Sciatic nerve (tissue), 2 donors: ENCODE measurements at regions of chr6 and their contacts with region 1.

Region 1: GRCh38 chr6:161971043-161971442 is 697.2 kb upstream of the AGPAT4 start:
- DNase-seq: no peak
- ATAC-seq: no peak

Region 2: GRCh38 chr6:161710698-161711097 is 260.3 kb before region 1 on chr6:
- intact Hi-C with region 1: no loop called
- DNase-seq: no peak
- ATAC-seq: no peak

Region 3: GRCh38 chr6:161985876-161986423 is 14.9 kb after region 1 on chr6:
- intact Hi-C with region 1: loop called (anchors 1 kb)
- DNase-seq: no peak
- ATAC-seq: no peak